Gastrocnemius medialis (tissue), 4 donors: ENCODE measurements at regions of chrX and their contacts with region 1.

Region 1: DNA sequence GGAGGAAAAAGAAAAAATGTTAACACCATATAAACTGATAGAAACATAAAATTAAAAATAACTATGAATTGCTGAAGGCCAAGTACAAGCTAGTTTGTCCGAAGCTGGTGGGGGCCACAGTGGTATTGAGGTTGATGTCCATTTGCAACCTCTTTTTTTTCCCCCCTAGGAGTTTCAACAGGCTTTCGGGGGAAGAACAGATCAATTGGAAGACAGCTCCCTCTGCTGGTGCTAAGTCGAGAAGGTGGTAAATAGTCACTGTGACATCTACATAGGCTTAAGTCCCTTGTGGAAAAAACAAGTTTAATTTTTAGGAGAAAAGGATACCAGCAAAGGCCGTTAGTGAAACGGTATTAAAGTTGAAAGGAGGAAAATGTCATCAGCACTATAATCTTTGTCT is 115.7 kb upstream of the ZXDA start:
- DNase-seq: no peak
- ATAC-seq: no peak
- H3K4me3 ChIP-seq: no peak overlapping the region
- H3K27ac ChIP-seq: no peak overlapping the region
- H3K4me1 ChIP-seq: no peaks in the 10 kb centered on the region
- H3K27me3 ChIP-seq: no peaks in the 10 kb centered on the region
- CTCF ChIP-seq: peak; percentile 16 to 63 (median 39)
- POLR2A ChIP-seq: no peak

Region 2: GRCh38 chrX:56788717-56789122 is 1237.3 kb before region 1 on chrX:
- in situ Hi-C with region 1: no loop called
- intact Hi-C with region 1: loop called (anchors 10 kb)
- DNase-seq: peak in 1 of 2 donors; percentile 27
- ATAC-seq: peak in 1 of 2 donors; percentile 83
- H3K4me3 ChIP-seq: peak overlapping the region in 3 of 4 donors; percentile 39 to 53 (median 49)
- H3K27ac ChIP-seq: peak overlapping the region in 3 of 4 donors; percentile 72 to 82 (median 73)
- H3K4me1 ChIP-seq: peaks cover 0 to 8% of the 10 kb centered on the region in 2 donors
- H3K27me3 ChIP-seq: no peaks in the 10 kb centered on the region
- CTCF ChIP-seq: peak in 4 of 5 experiments; percentile 12 to 56 (median 39)
- POLR2A ChIP-seq: no peak

Region 3: GRCh38 chrX:57641338-57641737 is 384.6 kb before region 1 on chrX:
- in situ Hi-C with region 1: no loop called
- intact Hi-C with region 1: no loop called
- DNase-seq: no peak
- ATAC-seq: no peak
- H3K4me3 ChIP-seq: no peak overlapping the region
- H3K27ac ChIP-seq: no peak overlapping the region
- H3K4me1 ChIP-seq: no peaks in the 10 kb centered on the region
- H3K27me3 ChIP-seq: no peaks in the 10 kb centered on the region
- CTCF ChIP-seq: no peak
- POLR2A ChIP-seq: no peak

Region 4: DNA sequence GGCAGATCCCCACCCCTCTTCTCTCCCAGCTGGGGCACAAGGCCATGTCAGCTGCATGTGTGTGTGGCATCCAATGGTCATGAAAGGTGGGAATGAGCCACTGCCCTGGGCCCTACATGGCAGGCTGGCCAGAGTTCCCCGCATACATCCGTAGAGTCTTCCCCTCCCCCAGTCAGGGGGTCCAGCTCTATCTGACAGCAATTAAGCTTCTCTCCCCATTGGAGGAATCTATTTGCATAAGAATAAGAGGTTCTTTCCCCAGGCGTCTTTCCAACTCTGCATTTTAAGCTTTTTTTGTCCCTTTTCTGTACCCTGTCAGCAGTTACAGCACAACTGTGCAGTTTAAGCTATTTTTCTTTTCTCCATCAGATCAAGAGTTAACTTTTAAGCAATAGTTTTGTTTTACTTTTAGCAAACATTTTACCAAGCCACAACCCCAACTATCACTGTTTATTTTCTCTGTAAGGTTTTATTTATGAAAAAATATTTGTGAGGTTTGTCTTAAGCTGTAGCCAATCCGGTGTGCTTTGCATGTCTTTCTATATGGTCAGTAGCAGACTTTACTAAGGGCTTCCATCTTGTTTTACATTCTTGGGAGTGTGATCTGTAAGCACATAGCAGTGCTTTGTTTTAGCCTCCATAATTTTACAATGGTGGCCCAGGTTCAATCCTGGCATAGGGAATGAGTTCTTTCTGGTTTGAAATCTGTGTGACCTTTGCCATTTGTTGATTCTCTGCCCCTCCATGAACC is 374.6 kb before region 1 on chrX:
- in situ Hi-C with region 1: no loop called
- intact Hi-C with region 1: no loop called
- DNase-seq: no peak
- ATAC-seq: no peak
- H3K4me3 ChIP-seq: no peak overlapping the region
- H3K27ac ChIP-seq: no peak overlapping the region
- H3K4me1 ChIP-seq: no peaks in the 10 kb centered on the region
- H3K27me3 ChIP-seq: no peaks in the 10 kb centered on the region
- CTCF ChIP-seq: no peak
- POLR2A ChIP-seq: no peak

Region 5: GRCh38 chrX:57929373-57929772 is 96.6 kb before region 1 on chrX:
- in situ Hi-C with region 1: no loop called
- intact Hi-C with region 1: loop called (anchors 10 kb)
- DNase-seq: no peak
- ATAC-seq: peak in 1 of 2 donors; percentile 60
- H3K4me3 ChIP-seq: no peak overlapping the region
- H3K27ac ChIP-seq: no peak overlapping the region
- H3K4me1 ChIP-seq: peaks cover 0 to 8% of the 10 kb centered on the region in 2 donors
- H3K27me3 ChIP-seq: no peaks in the 10 kb centered on the region
- CTCF ChIP-seq: peak; percentile 9 to 59 (median 36)
- POLR2A ChIP-seq: no peak